GM13977 (cell line): ENCODE measurements at regions of chr10 and their contacts with region 1.

Region 1: DNA sequence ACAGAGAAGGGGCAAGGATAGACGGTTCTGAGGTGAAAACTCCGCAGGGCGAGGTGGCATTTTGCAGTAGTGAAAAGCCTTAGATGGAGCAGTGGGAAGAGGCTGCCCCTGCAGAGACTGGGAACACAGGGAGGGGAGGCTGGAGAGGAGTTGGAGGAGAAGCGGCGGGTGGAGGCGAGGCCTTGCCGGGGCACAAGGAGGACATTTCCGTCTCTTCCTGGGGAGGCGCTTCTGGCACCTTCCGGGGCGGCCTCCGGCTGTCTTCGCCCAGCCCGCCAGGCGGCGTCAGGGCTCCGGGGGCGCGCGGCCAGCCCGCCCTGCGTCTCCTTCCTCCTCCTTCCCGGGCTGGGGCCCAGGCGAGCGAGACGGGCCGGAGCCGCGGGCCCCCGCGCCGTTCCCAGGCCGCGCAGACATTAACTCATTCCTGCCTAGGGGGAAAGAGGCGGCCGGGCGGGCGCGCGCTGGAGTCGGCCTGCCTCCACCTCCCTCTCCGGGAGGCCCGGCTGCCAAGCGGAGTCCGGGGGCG is 42.7 kb downstream of the LDB3 start:
- DNase-seq: peak; percentile 96
- CTCF ChIP-seq: peak; percentile 94

Region 2: DNA sequence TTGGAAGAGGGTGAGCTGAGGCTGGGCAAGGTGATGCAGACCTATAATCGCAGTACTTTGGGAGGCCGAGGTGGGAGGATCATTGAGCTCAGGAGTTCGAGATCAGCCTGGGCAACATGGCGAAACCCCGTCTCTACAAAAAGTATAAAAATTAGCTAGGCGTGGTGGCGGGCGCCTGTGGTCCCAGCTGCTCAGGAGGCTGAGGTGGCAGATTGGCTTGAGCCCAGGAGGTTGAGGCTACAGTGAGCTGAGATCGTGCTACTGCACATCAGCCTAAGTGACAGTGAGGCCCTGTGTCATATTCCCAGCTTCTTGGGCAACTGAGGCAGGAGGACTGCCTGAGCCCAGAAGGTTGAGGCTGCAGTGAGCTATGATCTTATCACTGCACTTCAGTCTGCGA is 58.9 kb after region 1 on chr10:
- in situ Hi-C with region 1: loop called (anchors 10 kb)
- DNase-seq: no peak
- CTCF ChIP-seq: no peak

Region 3: DNA sequence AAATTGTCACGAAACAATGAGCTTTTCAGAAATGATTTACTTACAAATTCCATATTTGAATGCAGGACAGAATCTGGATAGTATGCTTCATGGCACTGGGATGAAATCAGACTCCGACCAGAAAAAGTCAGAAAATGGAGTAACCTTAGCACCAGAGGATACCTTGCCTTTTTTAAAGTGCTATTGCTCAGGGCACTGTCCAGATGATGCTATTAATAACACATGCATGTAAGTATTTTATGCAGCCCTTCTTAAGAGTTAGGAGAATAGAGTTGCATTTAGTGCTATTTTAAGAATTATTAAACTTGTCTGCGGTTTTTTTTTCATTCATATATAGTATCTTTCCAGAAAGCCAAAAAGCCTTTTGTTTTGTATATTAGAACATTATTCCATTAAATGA is 178.9 kb after region 1 on chr10:
- in situ Hi-C with region 1: loop called (anchors 5 kb)
- DNase-seq: no peak
- CTCF ChIP-seq: no peak